CD4-positive, alpha-beta memory T cell (primary cell): ENCODE measurements at regions of chr15 and their contacts with region 1.

Region 1: DNA sequence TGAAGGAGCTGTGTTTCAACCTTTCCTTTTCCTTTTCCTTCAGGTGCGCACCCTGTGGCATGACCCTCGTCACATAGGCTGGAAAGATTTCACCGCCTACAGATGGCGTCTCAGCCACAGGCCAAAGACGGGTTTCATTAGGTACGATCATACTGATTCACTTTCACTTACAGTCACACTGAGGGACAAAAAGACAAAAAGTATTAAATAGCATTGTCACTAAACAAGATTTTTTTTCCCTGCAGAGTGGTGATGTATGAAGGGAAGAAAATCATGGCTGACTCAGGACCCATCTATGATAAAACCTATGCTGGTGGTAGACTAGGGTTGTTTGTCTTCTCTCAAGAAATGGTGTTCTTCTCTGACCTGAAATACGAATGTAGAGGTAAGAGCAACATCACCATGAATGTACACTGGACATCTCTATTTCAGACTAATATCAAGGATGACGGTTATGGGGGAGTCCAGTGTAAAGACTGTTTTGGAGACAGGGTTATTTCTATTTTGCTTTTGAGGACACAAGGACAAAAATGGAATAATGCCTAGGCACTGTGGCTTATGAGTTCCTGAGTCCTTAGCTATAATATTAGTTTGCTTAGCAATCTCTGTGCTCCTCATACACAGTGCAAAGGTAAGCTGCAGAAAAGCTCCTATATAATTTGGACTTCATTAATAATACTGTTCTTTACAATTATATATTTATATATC is 13.3 kb downstream of the THBS1 start:
- DNase-seq: peak in 4 of 5 donors; percentile 40 to 45 (median 42)
- H3K4me3 ChIP-seq: no peak overlapping the region
- H3K4me3 Mint-ChIP-seq: peak overlapping the region in 6 of 8 donors; percentile 13 to 78 (median 52)
- H3K27ac ChIP-seq: peak overlapping the region; percentile 22
- H3K27ac Mint-ChIP-seq: peak overlapping the region in 5 of 7 donors; percentile 3 to 77 (median 67)
- H3K4me1 ChIP-seq: peaks cover 5% of the 10 kb centered on the region
- H3K4me1 Mint-ChIP-seq: peaks cover 3 to 9% (median 6%) of the 10 kb centered on the region in 4 donors
- H3K27me3 ChIP-seq: no peaks in the 10 kb centered on the region
- H3K27me3 Mint-ChIP-seq: no peaks in the 10 kb centered on the region

Region 2: GRCh38 chr15:39344662-39345141 is 249.5 kb before region 1 on chr15:
- CTCF ChIA-PET with region 1: no interaction called
- POLR2A ChIA-PET with region 1: no interaction called
- intact Hi-C with region 1: no loop called
- DNase-seq: no peak
- H3K4me3 ChIP-seq: no peak overlapping the region
- H3K4me3 Mint-ChIP-seq: no peak overlapping the region
- H3K27ac ChIP-seq: no peak overlapping the region
- H3K27ac Mint-ChIP-seq: no peak overlapping the region
- H3K4me1 ChIP-seq: no peaks in the 10 kb centered on the region
- H3K4me1 Mint-ChIP-seq: no peaks in the 10 kb centered on the region
- H3K27me3 ChIP-seq: no peaks in the 10 kb centered on the region
- H3K27me3 Mint-ChIP-seq: no peaks in the 10 kb centered on the region

Region 3: DNA sequence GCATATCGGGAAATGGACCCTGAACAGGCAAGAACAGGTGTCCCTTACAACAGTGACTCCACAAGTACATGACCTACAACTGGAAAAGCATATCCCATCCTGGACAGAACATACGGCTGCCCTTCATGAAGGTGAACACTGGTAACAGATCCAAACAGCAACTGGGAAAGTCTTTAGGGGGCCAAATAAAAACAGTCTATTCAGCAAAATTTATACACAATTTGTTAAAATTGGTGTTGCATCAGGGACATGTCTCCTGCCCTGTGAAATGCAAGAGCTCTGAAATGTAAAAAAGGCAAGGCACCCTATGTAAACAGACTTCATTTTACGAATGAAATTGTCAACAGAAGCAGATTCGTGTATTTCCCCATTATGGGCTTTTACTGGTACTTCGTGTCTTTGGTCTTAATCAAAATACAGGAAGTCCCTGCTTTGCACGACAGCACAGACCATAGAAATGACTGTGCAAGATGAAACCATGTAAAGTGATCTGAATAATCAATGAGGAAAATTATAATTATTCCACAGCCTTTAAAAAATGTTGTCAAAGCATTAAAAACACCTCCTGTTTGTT is 140.6 kb before region 1 on chr15:
- CTCF ChIA-PET with region 1: no interaction called
- POLR2A ChIA-PET with region 1: no interaction called
- intact Hi-C with region 1: no loop called
- DNase-seq: no peak
- H3K4me3 ChIP-seq: no peak overlapping the region
- H3K4me3 Mint-ChIP-seq: no peak overlapping the region
- H3K27ac ChIP-seq: no peak overlapping the region
- H3K27ac Mint-ChIP-seq: no peak overlapping the region
- H3K4me1 ChIP-seq: no peaks in the 10 kb centered on the region
- H3K4me1 Mint-ChIP-seq: no peaks in the 10 kb centered on the region
- H3K27me3 ChIP-seq: no peaks in the 10 kb centered on the region
- H3K27me3 Mint-ChIP-seq: peaks cover 13 to 17% of the 10 kb centered on the region in 2 donors

Region 4: GRCh38 chr15:39580117-39580484 is 14.1 kb before region 1 on chr15:
- CTCF ChIA-PET with region 1: interaction called, 45 read pairs
- POLR2A ChIA-PET with region 1: interaction called, 4 read pairs
- intact Hi-C with region 1: no loop called
- DNase-seq: peak; percentile 76 to 84 (median 84)
- H3K4me3 ChIP-seq: peak overlapping the region in 1 of 2 donors; percentile 56
- H3K4me3 Mint-ChIP-seq: peak overlapping the region; percentile 63 to 90 (median 75)
- H3K27ac ChIP-seq: no peak overlapping the region
- H3K27ac Mint-ChIP-seq: peak overlapping the region in 2 of 7 donors; percentile 35 to 69
- H3K4me1 ChIP-seq: peaks cover 14% of the 10 kb centered on the region
- H3K4me1 Mint-ChIP-seq: peaks cover 9 to 53% (median 19%) of the 10 kb centered on the region in 4 donors
- H3K27me3 ChIP-seq: peaks cover 2% of the 10 kb centered on the region
- H3K27me3 Mint-ChIP-seq: peaks cover 15 to 32% of the 10 kb centered on the region in 2 donors

Region 5: GRCh38 chr15:39605146-39605545 is 10.9 kb after region 1 on chr15:
- CTCF ChIA-PET with region 1: interaction called, 12 read pairs
- POLR2A ChIA-PET with region 1: interaction called, 3 read pairs
- intact Hi-C with region 1: no loop called
- DNase-seq: no peak
- H3K4me3 ChIP-seq: no peak overlapping the region
- H3K4me3 Mint-ChIP-seq: no peak overlapping the region
- H3K27ac ChIP-seq: no peak overlapping the region
- H3K27ac Mint-ChIP-seq: no peak overlapping the region
- H3K4me1 ChIP-seq: no peaks in the 10 kb centered on the region
- H3K4me1 Mint-ChIP-seq: peaks cover 0 to 2% (median under 1%) of the 10 kb centered on the region in 4 donors
- H3K27me3 ChIP-seq: no peaks in the 10 kb centered on the region
- H3K27me3 Mint-ChIP-seq: peaks cover 1% of the 10 kb centered on the region in 2 donors

Region 6: DNA sequence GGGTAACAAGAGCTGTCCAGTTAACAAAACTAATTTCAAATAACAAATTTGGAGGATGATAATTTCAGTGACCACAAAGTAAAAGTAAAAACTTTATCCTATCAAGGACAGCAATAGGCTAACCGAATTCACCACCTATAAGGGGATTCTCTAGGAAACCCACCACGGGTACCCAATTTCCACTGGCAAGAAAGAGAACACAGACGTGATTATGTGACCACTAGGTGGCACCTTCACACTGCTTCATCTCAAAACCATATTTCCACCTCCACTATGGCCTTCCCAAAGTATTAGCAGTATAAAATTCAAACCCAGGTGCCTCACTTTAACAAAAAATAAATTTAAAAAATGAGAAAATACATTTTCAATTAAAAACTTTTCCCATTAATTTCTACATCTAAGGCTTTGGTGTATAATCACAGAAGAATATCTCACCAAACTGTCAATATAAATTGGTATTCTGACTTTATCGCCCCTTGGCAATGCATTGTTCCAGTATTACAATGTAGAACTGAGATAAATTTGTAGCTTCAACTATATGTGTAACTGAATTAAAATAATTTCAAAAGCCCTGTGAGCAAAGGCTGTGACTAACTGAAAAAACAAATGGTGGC is 91.9 kb after region 1 on chr15:
- CTCF ChIA-PET with region 1: interaction called, 31 read pairs
- POLR2A ChIA-PET with region 1: no interaction called
- intact Hi-C with region 1: loop called (anchors 1 kb)
- DNase-seq: peak in 4 of 5 donors; percentile 28 to 36 (median 31)
- H3K4me3 ChIP-seq: no peak overlapping the region
- H3K4me3 Mint-ChIP-seq: no peak overlapping the region
- H3K27ac ChIP-seq: no peak overlapping the region
- H3K27ac Mint-ChIP-seq: no peak overlapping the region
- H3K4me1 ChIP-seq: no peaks in the 10 kb centered on the region
- H3K4me1 Mint-ChIP-seq: peaks cover 0 to 15% (median 4%) of the 10 kb centered on the region in 4 donors
- H3K27me3 ChIP-seq: no peaks in the 10 kb centered on the region
- H3K27me3 Mint-ChIP-seq: peaks cover 0 to 1% of the 10 kb centered on the region in 2 donors

Region 7: DNA sequence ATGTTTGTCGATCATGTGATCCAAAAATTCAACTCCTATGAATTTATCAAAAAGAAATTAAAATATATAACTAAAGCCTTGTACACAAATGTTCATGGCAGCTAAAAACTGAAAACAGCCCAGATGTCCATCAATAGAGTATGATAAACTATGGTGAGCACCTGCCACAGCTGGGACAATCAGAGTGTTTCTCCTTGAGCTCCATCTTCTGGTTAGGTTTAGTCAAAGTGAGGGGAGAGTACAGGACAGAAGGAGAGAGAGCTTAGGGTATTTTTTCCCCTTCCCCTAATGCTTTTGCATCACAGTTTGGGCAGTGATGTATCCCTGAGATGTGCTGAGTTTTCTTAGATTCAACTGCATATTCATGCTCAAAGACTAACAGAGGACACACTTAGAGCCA is 122.9 kb after region 1 on chr15:
- CTCF ChIA-PET with region 1: interaction called, 7 read pairs
- POLR2A ChIA-PET with region 1: no interaction called
- intact Hi-C with region 1: loop called (anchors 1 kb)
- DNase-seq: no peak
- H3K4me3 ChIP-seq: no peak overlapping the region
- H3K4me3 Mint-ChIP-seq: no peak overlapping the region
- H3K27ac ChIP-seq: no peak overlapping the region
- H3K27ac Mint-ChIP-seq: no peak overlapping the region
- H3K4me1 ChIP-seq: no peaks in the 10 kb centered on the region
- H3K4me1 Mint-ChIP-seq: no peaks in the 10 kb centered on the region
- H3K27me3 ChIP-seq: no peaks in the 10 kb centered on the region
- H3K27me3 Mint-ChIP-seq: no peaks in the 10 kb centered on the region